H1 (cell line): ENCODE measurements at regions of chr6 and their contacts with region 1.

Region 1: DNA sequence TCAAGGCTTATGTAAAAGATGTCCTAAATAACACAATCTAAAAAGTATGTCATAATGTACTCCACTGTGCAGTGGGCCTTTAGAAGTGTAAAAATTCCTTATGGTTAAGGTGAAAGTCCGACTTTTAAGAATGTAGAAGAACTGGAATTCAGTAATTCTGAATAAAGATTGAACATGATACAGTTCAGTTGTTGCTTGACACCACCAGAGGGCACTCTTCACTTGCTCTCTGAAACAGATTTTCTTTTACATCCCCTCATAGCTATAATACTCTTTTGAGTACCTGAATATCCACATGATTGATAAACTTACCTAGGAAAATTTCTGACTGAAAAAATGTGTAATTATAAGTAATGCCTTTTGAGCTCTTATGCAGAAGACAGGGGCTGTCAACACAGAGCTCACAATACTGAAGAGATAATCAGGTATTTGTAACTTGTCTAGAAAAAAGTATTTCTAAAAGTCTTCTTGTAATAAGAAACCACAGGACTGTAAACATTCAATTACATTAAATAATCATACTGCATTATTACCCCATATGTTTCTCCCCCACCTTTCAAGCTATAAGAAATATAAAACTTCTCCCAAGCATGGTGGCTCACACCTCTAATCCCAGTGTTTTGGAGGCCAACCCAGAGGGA is 92.1 kb downstream of the POPDC3 start:
- DNase-seq: no peak
- H3K4me3 ChIP-seq: no peak overlapping the region
- H3K27ac ChIP-seq: no peak overlapping the region
- H3K4me1 ChIP-seq: no peaks in the 10 kb centered on the region
- H3K27me3 ChIP-seq: no peaks in the 10 kb centered on the region
- CTCF ChIP-seq: peak in 2 of 3 experiments; percentile 55 to 74; a peak in 2 of 4 replicates
- EP300 ChIP-seq: no peak
- POLR2A ChIP-seq: no peak
- RAD21 ChIP-seq: peak; percentile 89 to 90

Region 2: DNA sequence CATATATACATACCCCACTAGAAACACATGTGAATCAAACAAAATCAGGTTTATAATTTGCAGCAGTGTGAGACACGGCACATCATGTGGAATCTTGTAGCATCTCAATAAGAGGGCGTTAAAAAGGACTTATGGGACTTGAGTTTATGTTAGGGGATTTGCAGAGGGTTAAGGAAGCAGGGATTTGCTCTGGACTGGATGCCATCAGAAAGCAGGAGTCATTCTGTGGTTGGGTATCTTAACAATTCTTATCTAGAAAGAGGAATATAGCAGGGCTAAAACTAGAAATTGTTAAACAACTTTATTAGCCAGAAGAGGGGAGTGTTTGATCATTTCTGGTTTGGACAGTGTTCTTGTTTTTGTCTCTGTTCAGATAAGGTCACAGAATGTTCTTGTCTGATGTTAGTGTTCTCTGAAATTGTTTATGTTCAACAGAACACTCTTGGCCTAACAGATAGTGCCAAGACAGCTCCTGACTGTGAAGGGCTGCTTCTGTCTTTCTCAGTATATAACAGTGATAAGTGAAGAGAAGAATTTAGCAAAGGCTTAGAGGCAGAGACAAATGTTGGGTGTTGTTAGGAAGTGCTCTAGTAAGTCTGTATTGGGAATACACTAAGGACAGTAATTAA is 91.6 kb before region 1 on chr6:
- CTCF ChIA-PET with region 1: no interaction called
- POLR2A ChIA-PET with region 1: no interaction called
- DNase-seq: no peak
- H3K4me3 ChIP-seq: no peak overlapping the region
- H3K27ac ChIP-seq: no peak overlapping the region
- H3K4me1 ChIP-seq: no peaks in the 10 kb centered on the region; a peak in 1 of 7 replicates
- H3K27me3 ChIP-seq: no peaks in the 10 kb centered on the region
- CTCF ChIP-seq: no peak
- EP300 ChIP-seq: no peak
- POLR2A ChIP-seq: no peak
- RAD21 ChIP-seq: no peak

Region 3: DNA sequence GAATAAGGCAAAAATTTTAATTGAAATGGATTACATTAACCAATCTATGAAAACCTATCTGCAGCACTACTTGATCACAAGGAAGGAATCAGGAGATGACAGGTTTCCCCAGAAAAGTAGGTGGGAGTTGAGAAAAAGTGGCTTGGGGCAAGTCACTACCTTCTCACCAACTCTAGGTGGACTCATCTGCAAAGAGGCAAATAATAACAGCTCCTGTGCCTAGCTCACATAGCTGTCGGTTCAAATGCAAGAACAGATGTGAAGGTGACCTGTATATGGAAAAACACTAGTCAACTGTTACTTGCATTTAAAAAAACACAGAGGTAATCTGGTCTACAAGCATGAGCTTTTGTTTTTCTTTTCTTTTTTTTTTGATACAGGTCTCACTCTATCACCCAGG is 24.9 kb after region 1 on chr6:
- CTCF ChIA-PET with region 1: interaction called, 18 read pairs
- POLR2A ChIA-PET with region 1: no interaction called
- DNase-seq: no peak
- H3K4me3 ChIP-seq: no peak overlapping the region
- H3K27ac ChIP-seq: no peak overlapping the region
- H3K4me1 ChIP-seq: no peaks in the 10 kb centered on the region
- H3K27me3 ChIP-seq: no peaks in the 10 kb centered on the region
- CTCF ChIP-seq: peak in 2 of 3 experiments; percentile 26 to 41; a peak in 2 of 4 replicates
- EP300 ChIP-seq: no peak
- POLR2A ChIP-seq: no peak
- RAD21 ChIP-seq: peak; percentile 52 to 66

Region 4: DNA sequence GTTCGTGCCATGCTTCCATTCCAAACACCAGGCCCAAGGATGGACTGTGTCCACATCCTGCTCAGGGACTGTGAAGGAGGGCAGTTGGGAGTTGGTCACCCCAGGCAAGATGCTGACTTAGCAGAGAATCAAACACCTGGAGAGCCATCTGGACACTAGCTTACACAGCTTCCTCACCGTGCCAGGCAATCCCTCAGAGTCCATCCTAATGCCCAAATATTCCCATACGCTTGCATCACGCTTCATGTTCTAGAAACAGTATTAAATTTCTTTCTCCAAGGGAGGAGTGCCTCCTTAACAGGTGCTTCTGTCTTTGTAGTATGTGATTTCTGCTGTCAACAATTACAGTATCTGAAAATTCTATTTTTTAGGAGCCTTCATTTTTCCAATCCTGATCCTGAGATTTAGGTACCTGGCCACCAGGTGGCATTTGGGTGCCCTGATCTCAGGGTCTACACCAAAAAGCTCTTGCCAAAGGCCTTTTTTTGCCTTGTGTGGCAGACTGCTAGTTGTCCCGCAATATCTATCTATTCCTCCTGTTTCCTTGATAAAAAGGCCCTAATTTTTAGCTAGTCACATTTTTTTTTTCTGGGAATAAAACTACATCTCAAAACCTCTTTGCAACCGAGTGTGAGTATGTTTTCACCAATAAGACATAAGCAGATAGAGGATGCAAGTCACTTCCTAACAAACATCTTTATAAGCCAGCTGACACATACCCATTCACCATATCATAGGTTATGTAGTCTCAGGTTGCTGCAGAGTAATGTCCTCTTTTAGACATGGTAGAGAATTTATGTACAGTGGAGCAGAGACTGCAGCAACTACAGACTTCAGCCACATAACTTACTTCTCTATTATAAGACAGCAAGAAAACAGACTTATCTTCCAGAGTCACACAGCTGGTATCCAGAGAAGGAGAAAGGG is 230.2 kb after region 1 on chr6:
- CTCF ChIA-PET with region 1: interaction called, 11 read pairs
- POLR2A ChIA-PET with region 1: no interaction called
- DNase-seq: no peak
- H3K4me3 ChIP-seq: no peak overlapping the region
- H3K27ac ChIP-seq: no peak overlapping the region
- H3K4me1 ChIP-seq: no peaks in the 10 kb centered on the region
- H3K27me3 ChIP-seq: no peaks in the 10 kb centered on the region
- CTCF ChIP-seq: peak; percentile 20 to 64 (median 63)
- EP300 ChIP-seq: no peak
- POLR2A ChIP-seq: no peak
- RAD21 ChIP-seq: peak; percentile 58 to 62

Region 5: DNA sequence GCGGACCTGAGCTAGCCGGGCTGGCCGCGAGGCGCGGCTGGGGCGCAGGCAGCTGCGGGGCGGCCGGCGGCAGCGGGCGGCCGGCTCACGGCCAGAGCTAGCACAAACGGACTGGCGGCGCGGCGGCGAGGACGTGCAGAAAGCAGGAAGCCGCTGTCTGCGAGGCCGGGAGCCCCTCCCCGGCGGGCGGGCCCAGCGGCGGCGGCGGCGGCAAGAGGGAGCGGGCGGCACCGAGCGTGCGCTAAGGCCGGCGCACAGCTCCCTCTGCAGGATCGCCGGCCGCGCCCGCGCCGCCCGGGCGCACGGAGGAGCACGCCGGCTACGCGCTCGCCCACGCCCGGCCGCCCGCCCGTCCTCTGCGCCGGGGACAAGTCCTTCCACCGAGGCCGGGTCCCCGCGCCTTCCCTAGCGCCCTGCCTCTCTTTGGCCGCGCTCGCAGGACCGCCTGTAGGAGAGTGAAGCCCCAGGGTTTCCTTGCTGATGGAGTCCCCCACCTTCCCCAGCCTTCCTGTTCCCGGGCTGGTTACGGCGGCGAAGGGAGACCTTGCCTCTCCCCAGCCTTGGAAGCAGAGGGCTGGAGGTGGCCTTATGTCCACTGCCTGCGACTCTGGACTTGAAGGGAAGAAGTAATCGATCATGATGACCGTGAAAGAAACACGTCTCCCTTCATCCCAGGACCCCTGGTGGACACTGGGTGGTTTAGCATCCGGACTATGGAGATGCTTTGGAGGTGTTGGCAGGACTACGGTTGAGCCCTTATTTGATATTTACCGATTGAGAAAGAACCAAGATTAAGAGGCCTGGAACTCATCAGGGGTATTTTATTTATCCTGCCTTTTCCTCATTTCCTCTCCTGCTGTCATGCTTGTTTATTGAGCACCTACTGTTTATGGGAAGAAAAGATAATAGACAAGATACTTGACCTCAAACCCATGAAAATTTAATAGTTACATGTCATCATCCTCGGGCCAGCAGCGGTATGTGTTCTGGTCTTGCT is 315.5 kb after region 1 on chr6 and contains the start of gene PREP:
- CTCF ChIA-PET with region 1: interaction called, 12 read pairs
- POLR2A ChIA-PET with region 1: no interaction called
- DNase-seq: peak in 1 of 2 experiments; percentile 85
- H3K4me3 ChIP-seq: peak within 1 kb of the TSS; percentile 80 to 100 (median 82)
- H3K27ac ChIP-seq: peak within 1 kb of the TSS; percentile 57
- H3K4me1 ChIP-seq: peaks cover 7 to 16% (median 11%) of the 10 kb centered on the region in 4 experiments; a peak in 6 of 7 replicates
- H3K27me3 ChIP-seq: no peaks in the 10 kb centered on the region
- CTCF ChIP-seq: peak; percentile 57 to 70 (median 62)
- EP300 ChIP-seq: peak in 1 of 2 experiments; percentile 48; a peak in 1 of 3 replicates
- POLR2A ChIP-seq: peak in 1 of 2 experiments; percentile 55; a peak in 2 of 3 replicates
- RAD21 ChIP-seq: peak; percentile 9 to 48; a peak in 3 of 4 replicates
- total RNA-seq, gene PREP: 67.8 and 70.0 TPM in 2 replicates